ENCODE measurements at regions of chr14 and their contacts with region 1.

Region 1: GRCh38 chr14:30270200-30271161 is 288.5 kb upstream of the G2E3 start:
- DNase-seq: peak; percentile 75
- ATAC-seq: peak; percentile 94
- H3K4me3 Mint-ChIP-seq: no peak overlapping the region
- H3K27ac Mint-ChIP-seq: no peak overlapping the region
- H3K4me1 Mint-ChIP-seq: peaks cover 5% of the 10 kb centered on the region
- H3K27me3 Mint-ChIP-seq: peaks cover 4% of the 10 kb centered on the region
- CTCF ChIP-seq: peak; percentile 83

Region 2: GRCh38 chr14:30257946-30258657 is 12.4 kb before region 1 on chr14:
- CTCF ChIA-PET with region 1: interaction called, 25 read pairs
- POLR2A ChIA-PET with region 1: no interaction called
- intact Hi-C with region 1: no loop called
- DNase-seq: no peak
- ATAC-seq: no peak
- H3K4me3 Mint-ChIP-seq: no peak overlapping the region
- H3K27ac Mint-ChIP-seq: no peak overlapping the region
- H3K4me1 Mint-ChIP-seq: no peaks in the 10 kb centered on the region
- H3K27me3 Mint-ChIP-seq: peaks cover 2% of the 10 kb centered on the region
- CTCF ChIP-seq: no peak

Region 3: DNA sequence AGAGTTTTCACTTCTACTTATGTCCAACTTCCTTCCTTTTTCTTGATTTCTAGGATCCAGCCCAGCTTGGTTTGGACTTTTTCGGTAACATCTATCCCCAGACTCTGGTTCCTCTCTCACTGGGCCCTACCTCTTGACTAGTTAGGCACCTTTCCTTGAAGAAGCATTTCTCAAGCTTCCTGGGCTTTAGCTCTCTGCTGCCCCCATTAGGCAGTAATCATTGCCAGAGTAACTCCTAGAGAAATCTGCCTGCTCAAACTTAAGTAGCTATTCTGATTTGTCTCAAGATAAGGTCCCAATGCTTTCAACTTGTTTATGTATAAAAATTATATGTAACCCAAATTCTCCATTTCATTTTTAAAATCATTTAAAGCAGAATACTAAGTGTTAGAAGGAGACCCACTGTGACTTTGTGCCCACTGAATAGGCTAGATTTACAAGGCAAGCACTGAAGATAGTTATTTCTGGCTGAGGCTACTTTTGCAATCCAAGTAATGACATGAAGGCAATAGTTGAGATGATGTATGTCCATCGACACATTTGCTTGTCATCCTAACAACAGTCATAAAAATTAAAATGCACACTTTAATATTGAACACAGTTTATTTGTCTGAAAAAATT is 13.5 kb after region 1 on chr14:
- CTCF ChIA-PET with region 1: interaction called, 37 read pairs
- POLR2A ChIA-PET with region 1: no interaction called
- intact Hi-C with region 1: no loop called
- DNase-seq: peak; percentile 28
- ATAC-seq: no peak
- H3K4me3 Mint-ChIP-seq: no peak overlapping the region
- H3K27ac Mint-ChIP-seq: no peak overlapping the region
- H3K4me1 Mint-ChIP-seq: no peaks in the 10 kb centered on the region
- H3K27me3 Mint-ChIP-seq: no peaks in the 10 kb centered on the region
- CTCF ChIP-seq: peak; percentile 59